ENCODE measurements at regions of chr10 and their contacts with region 1.

Region 1: DNA sequence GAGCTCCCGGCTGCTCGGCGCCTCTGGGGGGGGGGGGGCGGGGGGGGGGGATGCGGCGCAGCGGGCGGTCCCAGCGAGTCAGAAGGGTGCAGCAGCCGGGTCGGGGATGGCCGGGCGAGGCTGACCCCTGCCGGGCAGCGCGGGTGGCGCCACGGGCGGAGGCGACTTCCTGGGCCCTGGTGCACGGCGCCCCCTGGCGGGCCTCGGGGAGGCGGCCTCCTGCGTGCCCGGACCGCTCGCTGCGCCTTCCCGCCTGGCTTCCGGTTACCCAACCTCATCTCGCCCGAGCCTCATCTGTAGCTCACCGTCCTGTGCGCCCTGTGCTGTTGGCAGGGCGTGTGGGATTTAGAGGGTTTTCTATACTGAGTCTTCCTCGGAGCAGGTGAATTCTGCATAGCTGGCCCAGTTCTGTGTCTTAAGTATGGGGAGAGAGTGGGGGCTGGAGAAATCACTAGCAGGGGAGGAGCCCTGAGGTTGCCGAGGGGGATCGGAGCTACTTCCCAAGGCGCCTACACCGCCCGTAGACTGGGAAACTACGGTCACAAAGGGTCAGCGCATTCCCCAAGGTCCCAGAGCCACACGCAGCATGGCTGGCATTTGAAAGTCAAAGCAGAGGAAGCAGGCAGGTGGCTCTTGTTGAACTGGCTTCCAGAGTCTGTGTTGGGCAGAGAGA is 28.3 kb upstream of the WDFY4 start:
- DNase-seq: peak; percentile 93
- H3K4me3 ChIP-seq: peak overlapping the region in 3 of 4 donors; percentile 31 to 54 (median 47)
- H3K27ac ChIP-seq: peak overlapping the region in 3 of 4 donors; percentile 9 to 45 (median 31)
- H3K4me1 ChIP-seq: peaks cover 0 to 16% (median 14%) of the 10 kb centered on the region in 4 donors
- H3K27me3 ChIP-seq: peaks cover 7% of the 10 kb centered on the region
- CTCF ChIP-seq: peak; percentile 66 to 99 (median 96)
- EP300 ChIP-seq: no peak
- POLR2A ChIP-seq: no peak

Region 2: GRCh38 chr10:48363617-48364355 is 292.6 kb before region 1 on chr10:
- in situ Hi-C with region 1: loop called in 3 of 4 experiments (anchors 25 kb)
- intact Hi-C with region 1: loop called (anchors 10 kb)
- DNase-seq: peak; percentile 11
- H3K4me3 ChIP-seq: no peak overlapping the region
- H3K27ac ChIP-seq: no peak overlapping the region
- H3K4me1 ChIP-seq: peaks cover 0 to 24% (median 12%) of the 10 kb centered on the region in 4 donors
- H3K27me3 ChIP-seq: no peaks in the 10 kb centered on the region
- CTCF ChIP-seq: peak; percentile 46 to 66 (median 54)
- EP300 ChIP-seq: no peak
- POLR2A ChIP-seq: no peak

Region 3: GRCh38 chr10:48551861-48552591 is 104.4 kb before region 1 on chr10:
- in situ Hi-C with region 1: loop called in 3 of 4 experiments (anchors 5 to 10 kb)
- intact Hi-C with region 1: loop called (anchors 2 kb)
- DNase-seq: no peak
- H3K4me3 ChIP-seq: no peak overlapping the region
- H3K27ac ChIP-seq: no peak overlapping the region
- H3K4me1 ChIP-seq: peaks cover 0 to 5% (median 0%) of the 10 kb centered on the region in 4 donors
- H3K27me3 ChIP-seq: no peaks in the 10 kb centered on the region
- CTCF ChIP-seq: peak; percentile 47 to 62 (median 59)
- EP300 ChIP-seq: no peak
- POLR2A ChIP-seq: no peak

Region 4: GRCh38 chr10:48958598-48959190 is 302.3 kb after region 1 on chr10:
- in situ Hi-C with region 1: no loop called
- intact Hi-C with region 1: no loop called
- DNase-seq: no peak
- H3K4me3 ChIP-seq: no peak overlapping the region
- H3K27ac ChIP-seq: no peak overlapping the region
- H3K4me1 ChIP-seq: no peaks in the 10 kb centered on the region
- H3K27me3 ChIP-seq: no peaks in the 10 kb centered on the region
- CTCF ChIP-seq: no peak
- EP300 ChIP-seq: no peak
- POLR2A ChIP-seq: no peak

Region 5: DNA sequence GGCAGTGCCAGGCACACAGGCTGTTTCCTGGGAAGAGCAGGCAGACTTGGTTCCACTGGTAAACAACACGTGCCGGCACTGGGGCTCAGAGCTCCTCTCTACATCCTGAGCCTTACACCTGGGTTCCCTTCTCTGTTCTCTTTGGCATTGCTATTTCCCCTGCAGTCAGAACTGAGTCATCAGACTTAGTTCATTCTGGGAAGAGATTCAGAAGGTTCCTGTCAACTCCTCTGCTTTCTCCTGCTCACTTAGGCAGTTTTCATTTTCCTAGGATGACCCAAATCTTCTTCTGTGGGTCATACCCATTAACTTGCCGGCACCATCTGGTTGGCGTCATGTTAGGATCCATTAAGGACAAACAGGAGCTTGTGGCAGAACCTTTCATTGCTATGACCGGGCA is 316.7 kb after region 1 on chr10:
- in situ Hi-C with region 1: no loop called
- intact Hi-C with region 1: loop called (anchors 2 kb)
- DNase-seq: no peak
- H3K4me3 ChIP-seq: no peak overlapping the region
- H3K27ac ChIP-seq: no peak overlapping the region
- H3K4me1 ChIP-seq: no peaks in the 10 kb centered on the region
- H3K27me3 ChIP-seq: no peaks in the 10 kb centered on the region
- CTCF ChIP-seq: no peak
- EP300 ChIP-seq: no peak
- POLR2A ChIP-seq: no peak

Region 6: DNA sequence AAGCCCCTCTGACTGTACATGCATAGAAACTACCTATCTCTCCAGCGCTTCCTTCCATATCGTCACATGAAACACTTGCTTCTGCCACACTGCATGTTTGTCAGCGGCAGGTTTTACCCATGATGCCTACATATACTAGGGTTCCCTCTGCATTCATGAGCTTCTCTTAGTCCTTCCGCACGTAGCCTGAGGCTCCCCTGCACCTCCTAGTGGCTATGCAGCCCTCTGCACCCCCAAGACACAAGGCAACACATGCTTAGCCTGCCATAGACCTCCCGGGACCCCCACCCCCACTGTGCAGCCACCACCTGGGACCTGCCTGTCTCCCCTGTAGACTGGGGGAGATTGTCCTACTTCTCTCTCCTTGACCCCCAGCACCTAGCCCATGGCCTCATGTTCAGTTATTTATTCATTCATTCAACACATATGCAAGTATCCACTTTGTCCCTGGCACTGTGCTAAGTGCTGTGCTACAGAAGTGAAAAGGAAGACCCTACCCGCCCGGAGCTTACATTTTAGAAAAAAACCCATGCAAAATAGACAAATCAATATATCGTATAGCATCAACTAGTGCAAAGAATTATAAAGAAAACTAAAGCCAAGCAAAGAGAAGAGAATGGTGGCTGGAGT is 508.3 kb after region 1 on chr10:
- in situ Hi-C with region 1: loop called in 3 of 4 experiments (anchors 25 kb)
- intact Hi-C with region 1: no loop called
- DNase-seq: no peak
- H3K4me3 ChIP-seq: no peak overlapping the region
- H3K27ac ChIP-seq: no peak overlapping the region
- H3K4me1 ChIP-seq: no peaks in the 10 kb centered on the region
- H3K27me3 ChIP-seq: no peaks in the 10 kb centered on the region
- CTCF ChIP-seq: peak; percentile 48 to 53 (median 50)
- EP300 ChIP-seq: no peak
- POLR2A ChIP-seq: no peak

Region 7: DNA sequence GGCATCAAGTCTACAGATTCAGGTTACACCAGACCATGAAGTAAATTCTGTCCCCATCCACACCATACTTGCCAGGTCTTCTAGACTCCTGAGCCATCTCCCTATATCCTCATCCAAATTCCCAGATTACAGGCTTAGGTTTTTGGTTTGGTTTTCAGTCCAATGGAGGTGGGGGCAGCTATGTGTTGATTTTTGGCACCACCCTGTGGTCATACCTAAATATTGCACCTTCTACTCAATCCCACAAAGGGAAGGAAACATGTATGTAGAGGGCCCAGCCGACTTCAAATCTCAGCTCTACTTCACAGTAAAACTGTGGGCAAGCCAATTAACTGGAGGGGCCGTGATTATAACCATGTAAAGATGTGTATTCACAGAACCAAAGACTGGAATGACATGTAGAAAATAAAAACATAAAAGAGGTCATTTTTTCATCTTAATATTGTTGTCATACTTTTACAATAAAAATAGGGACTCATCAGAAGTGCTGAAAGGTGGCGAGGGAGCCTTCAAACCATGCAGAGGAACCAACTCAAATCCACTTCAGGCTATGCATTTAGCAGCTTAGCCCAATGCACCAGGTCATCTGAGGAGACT is 862.7 kb after region 1 on chr10:
- in situ Hi-C with region 1: loop called in 1 of 4 experiments (anchors 25 kb)
- intact Hi-C with region 1: no loop called
- DNase-seq: no peak
- H3K4me3 ChIP-seq: no peak overlapping the region
- H3K27ac ChIP-seq: no peak overlapping the region
- H3K4me1 ChIP-seq: no peaks in the 10 kb centered on the region
- H3K27me3 ChIP-seq: no peaks in the 10 kb centered on the region
- CTCF ChIP-seq: peak; percentile 53 to 62 (median 59)
- EP300 ChIP-seq: no peak
- POLR2A ChIP-seq: no peak